Head of caudate nucleus (tissue), 42 donors: ENCODE measurements at regions of chr10 and their contacts with region 1.

Region 1: GRCh38 chr10:73529089-73529832 is 33.4 kb upstream of the PPP3CB start:
- DNase-seq: peak in 36 of 42 donors; percentile 5 to 85 (median 51)

Region 2: GRCh38 chr10:73459683-73460314 is 69.5 kb before region 1 on chr10:
- intact Hi-C with region 1: no loop called
- DNase-seq: no peak

Region 3: GRCh38 chr10:73576178-73576889 is 47.1 kb after region 1 on chr10:
- intact Hi-C with region 1: no loop called
- DNase-seq: no peak

Region 4: GRCh38 chr10:73641328-73642060 is 112.2 kb after region 1 on chr10 and contains the start of gene MYOZ1:
- intact Hi-C with region 1: loop called (anchors 2 kb)
- DNase-seq: no peak